Activated T-helper 1 cell treated with anti-CD3 and anti-CD28 coated beads, Interleukin-12 subunit alpha, Interleukin-12 subunit beta, Interleukin-2, Interleukin-4 antibody, amounts not matched to agents 30 ng/mL and 10 ng/mL and 1 ng/mL, durations not matched to agents 14 hours and 24 hours and 36 hours (primary cell): ENCODE measurements at regions of chr1 and their contacts with region 1.

Region 1: DNA sequence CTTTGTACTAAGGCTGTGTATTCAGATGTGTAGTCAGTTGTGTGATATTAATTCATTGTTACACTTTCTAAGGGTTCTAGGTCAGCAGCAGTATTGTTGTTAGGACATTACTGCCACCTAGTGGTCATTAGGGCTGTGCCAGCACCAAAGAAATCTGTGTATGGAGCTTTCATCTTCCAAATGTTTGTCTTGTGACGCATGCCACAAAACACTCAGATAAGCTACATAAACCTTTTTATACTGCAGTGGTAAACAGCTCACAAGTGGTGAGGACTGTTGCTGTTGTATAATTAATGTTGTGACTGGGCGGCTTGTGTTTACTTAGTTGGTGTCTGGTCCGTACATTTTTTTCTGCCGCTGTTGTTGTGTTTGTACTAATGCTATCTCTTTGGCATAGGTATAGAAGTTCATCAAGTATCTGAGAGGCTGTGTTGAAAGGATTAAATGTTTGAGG is 51.7 kb downstream of the S1PR1 start:
- DNase-seq: peak; percentile 50
- H3K4me3 Mint-ChIP-seq: no peak overlapping the region
- H3K27ac Mint-ChIP-seq: no peak overlapping the region
- H3K4me1 Mint-ChIP-seq: peaks cover 83% of the 10 kb centered on the region
- H3K27me3 Mint-ChIP-seq: peaks cover 1% of the 10 kb centered on the region

Region 2: DNA sequence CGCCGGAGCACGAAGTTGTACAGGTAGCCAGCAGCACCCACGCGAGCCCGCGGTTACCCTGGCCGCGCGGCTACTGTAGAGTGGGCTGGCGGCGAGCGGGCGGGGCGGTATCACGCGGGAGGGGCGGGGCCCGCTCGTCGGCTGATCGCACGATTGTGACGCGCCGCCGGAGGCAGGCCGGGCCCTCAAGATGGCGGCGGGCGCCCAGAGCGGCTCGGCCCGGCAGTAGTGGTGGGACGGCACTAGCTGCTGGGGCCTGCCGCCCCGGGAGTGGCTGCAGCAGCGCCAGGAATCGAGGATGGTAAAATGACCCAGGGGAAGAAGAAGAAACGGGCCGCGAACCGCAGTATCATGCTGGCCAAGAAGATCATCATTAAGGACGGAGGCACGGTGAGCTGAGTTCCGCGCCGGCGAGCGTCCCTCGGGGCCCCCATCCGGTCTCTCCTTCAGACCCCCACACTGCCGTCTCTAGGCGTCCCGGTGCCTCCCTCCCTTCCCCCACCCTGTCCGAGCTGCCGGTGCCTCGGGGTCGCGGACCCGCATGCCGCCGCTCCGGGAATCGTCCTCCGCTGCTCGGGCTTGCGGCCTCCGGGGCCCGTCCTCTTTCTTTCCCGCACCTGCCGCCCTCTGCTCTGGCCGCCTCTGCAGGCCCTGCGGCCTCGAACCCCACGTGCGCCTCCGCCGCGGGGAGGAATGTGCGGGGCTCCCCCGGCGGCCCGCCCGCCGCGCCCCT is 1250.4 kb before region 1 on chr1:
- intact Hi-C with region 1: loop called (anchors 1 kb)
- DNase-seq: peak; percentile 85
- H3K4me3 Mint-ChIP-seq: peak overlapping the region; percentile 97
- H3K27ac Mint-ChIP-seq: peak overlapping the region; percentile 98
- H3K4me1 Mint-ChIP-seq: peaks cover 60% of the 10 kb centered on the region
- H3K27me3 Mint-ChIP-seq: no peaks in the 10 kb centered on the region

Region 3: DNA sequence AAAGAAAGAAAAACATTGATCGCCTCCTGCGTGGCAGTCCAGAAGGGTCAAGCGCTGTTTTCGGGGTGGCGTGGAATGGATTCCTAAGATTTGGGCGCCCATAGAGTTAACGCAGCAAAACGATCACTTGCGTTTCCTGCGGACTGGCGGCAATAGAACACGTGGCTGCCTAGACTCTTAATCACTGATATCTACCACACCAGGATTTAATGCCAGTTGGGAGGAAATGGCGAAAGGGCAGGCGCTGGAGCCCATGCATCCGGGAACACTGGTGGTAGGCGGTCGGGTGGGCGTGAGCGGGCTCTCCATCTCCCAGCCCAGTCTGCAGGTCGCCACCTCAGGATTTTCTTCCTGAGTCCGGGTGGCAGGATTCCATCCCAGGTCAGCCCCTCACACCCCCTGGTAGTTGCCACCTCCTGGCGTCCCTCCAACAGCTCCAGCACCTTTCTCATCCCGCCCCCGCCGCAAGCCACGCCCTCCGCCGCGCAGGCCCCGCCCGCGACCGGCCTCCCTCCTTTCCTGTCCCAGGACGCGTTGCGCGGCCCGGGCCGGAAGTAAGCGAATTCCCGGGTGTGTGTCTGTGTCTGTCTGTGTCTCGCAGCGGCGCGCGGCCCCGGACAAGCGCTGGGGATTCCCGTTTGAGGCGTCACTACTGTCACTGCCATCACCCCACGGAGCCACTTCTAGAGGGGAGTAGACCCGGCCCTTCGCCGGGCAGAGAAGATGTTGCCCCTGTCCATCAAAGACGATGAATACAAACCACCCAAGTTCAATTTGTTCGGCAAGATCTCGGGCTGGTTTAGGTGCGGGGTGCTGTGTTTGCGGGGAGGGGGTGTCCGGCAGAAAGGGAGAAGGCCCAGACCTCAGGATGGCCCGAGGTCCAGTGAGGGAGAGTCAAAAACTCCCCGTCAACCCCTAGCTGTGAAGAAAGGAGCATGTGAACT is 392.7 kb before region 1 on chr1 and contains the start of gene SLC30A7:
- intact Hi-C with region 1: loop called (anchors 1 kb)
- DNase-seq: peak; percentile 95
- H3K4me3 Mint-ChIP-seq: peak within 1 kb of the TSS; percentile 93
- H3K27ac Mint-ChIP-seq: peak within 1 kb of the TSS; percentile 96
- H3K4me1 Mint-ChIP-seq: peaks cover 64% of the 10 kb centered on the region
- H3K27me3 Mint-ChIP-seq: no peaks in the 10 kb centered on the region
- total RNA-seq, gene SLC30A7: 42.6 and 51.2 TPM in 2 replicates

Region 4: DNA sequence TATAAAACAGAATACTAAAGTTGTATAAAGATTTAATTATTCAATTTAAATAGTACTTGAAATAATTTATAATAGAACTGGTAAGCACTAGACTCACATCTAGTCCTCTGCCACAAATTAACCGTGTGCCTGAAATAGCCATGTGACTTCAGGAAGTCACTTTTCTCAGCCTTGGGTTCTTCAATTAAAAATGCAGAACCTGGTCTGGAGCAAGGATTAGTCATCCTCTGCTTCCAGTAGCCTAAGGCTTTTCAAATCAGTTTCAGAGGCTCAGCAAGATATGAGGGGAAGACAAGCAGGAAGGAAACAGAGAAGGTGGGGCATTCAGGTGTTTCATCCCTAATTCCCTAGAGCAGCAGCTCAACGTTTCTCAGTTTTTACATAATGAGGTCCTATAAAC is 286.0 kb before region 1 on chr1:
- intact Hi-C with region 1: loop called (anchors 1 kb)
- DNase-seq: no peak
- H3K4me3 Mint-ChIP-seq: no peak overlapping the region
- H3K27ac Mint-ChIP-seq: no peak overlapping the region
- H3K4me1 Mint-ChIP-seq: peaks cover 43% of the 10 kb centered on the region
- H3K27me3 Mint-ChIP-seq: no peaks in the 10 kb centered on the region

Region 5: GRCh38 chr1:101136739-101137138 is 151.8 kb before region 1 on chr1:
- intact Hi-C with region 1: loop called (anchors 1 kb)
- DNase-seq: peak; percentile 26
- H3K4me3 Mint-ChIP-seq: peak overlapping the region; percentile 30
- H3K27ac Mint-ChIP-seq: peak overlapping the region; percentile 38
- H3K4me1 Mint-ChIP-seq: peaks cover 63% of the 10 kb centered on the region
- H3K27me3 Mint-ChIP-seq: no peaks in the 10 kb centered on the region

Region 6: GRCh38 chr1:101253976-101254674 is 34.4 kb before region 1 on chr1:
- intact Hi-C with region 1: loop called (anchors 1 kb)
- DNase-seq: no peak
- H3K4me3 Mint-ChIP-seq: no peak overlapping the region
- H3K27ac Mint-ChIP-seq: no peak overlapping the region
- H3K4me1 Mint-ChIP-seq: peaks cover 38% of the 10 kb centered on the region
- H3K27me3 Mint-ChIP-seq: no peaks in the 10 kb centered on the region

Region 7: DNA sequence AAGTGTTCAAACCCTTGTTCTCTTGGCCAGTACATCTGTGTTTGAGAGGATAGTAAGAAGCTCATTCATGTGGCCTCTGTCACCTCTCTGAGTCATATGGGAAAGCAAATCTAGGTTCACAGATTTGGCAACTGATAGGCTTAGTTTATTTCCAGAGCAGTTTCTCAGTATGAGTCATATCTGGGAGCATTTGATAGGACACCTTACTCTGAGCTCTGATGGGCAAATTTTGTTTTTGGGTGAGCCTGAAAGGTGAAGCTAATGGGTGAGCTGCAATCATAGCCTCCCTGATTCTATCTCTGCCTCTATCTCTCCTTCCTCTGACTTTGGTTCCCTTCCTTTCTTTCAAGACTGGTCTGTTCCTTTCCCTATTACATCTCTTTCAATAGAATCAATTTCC is 82.7 kb after region 1 on chr1:
- intact Hi-C with region 1: loop called (anchors 1 kb)
- DNase-seq: peak; percentile 33
- H3K4me3 Mint-ChIP-seq: peak overlapping the region; percentile 40
- H3K27ac Mint-ChIP-seq: no peak overlapping the region
- H3K4me1 Mint-ChIP-seq: peaks cover 12% of the 10 kb centered on the region
- H3K27me3 Mint-ChIP-seq: peaks cover 14% of the 10 kb centered on the region